ENCODE measurements at regions of chr5 and their contacts with region 1.

Region 1: GRCh38 chr5:15003511-15003920 is 131.9 kb upstream of the ANKH start:
- DNase-seq: peak; percentile 68 to 73 (median 70)
- H3K4me3 ChIP-seq: no peak overlapping the region
- H3K4me3 Mint-ChIP-seq: no peak overlapping the region
- H3K27ac ChIP-seq: no peak overlapping the region
- H3K27ac Mint-ChIP-seq: no peak overlapping the region
- H3K4me1 ChIP-seq: no peaks in the 10 kb centered on the region
- H3K4me1 Mint-ChIP-seq: peaks cover 0 to 3% (median 1%) of the 10 kb centered on the region in 4 donors
- H3K27me3 ChIP-seq: no peaks in the 10 kb centered on the region
- H3K27me3 Mint-ChIP-seq: peaks cover 2 to 4% of the 10 kb centered on the region in 2 donors

Region 2: DNA sequence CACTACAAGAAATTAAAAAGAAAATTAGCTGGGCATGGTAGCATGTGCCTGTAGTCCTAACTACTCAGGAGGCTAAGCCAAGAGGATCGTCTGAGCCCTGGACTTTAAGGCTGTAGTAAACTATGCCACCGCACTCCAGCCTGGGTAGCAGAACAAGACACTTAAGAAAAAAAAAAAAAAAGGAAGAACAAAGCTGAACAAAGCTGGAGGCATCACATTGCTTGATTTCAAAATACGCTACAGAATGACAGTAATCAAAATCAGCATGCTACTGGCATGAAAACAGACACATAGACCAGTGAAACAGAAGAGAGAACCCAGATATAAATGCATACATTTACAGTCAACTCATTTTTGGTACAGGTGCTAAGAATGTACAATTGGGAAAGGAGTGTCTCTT is 353.5 kb before region 1 on chr5:
- CTCF ChIA-PET with region 1: interaction called, 11 read pairs
- POLR2A ChIA-PET with region 1: no interaction called
- intact Hi-C with region 1: no loop called
- DNase-seq: no peak
- H3K4me3 ChIP-seq: no peak overlapping the region
- H3K4me3 Mint-ChIP-seq: no peak overlapping the region
- H3K27ac ChIP-seq: no peak overlapping the region
- H3K27ac Mint-ChIP-seq: peak overlapping the region in 1 of 7 donors; percentile 60
- H3K4me1 ChIP-seq: peaks cover under 1% of the 10 kb centered on the region
- H3K4me1 Mint-ChIP-seq: peaks cover 0 to 2% (median 1%) of the 10 kb centered on the region in 4 donors
- H3K27me3 ChIP-seq: peaks cover 3% of the 10 kb centered on the region
- H3K27me3 Mint-ChIP-seq: peaks cover 15 to 17% of the 10 kb centered on the region in 2 donors

Region 3: DNA sequence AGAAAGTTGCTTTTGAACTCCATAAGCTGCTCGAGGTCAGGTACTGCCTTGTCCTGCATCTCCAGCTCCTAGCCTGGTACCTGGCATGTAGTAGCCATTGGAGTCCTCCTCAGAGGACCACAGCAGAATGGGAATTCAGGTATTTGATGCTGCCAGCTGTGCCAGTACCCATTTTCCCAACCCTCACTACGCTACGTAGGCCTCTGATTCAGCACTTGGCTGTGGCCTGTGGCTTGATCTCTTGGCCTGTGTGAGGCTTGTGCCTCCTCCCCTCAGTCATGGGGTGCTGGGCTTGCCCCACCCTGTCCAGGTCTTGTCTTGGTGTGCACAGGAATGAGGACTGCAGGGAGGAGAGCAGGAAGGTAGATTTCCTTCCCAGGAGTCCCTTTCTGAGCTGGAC is 327.2 kb before region 1 on chr5:
- CTCF ChIA-PET with region 1: interaction called, 104 read pairs
- POLR2A ChIA-PET with region 1: no interaction called
- intact Hi-C with region 1: no loop called
- DNase-seq: no peak
- H3K4me3 ChIP-seq: no peak overlapping the region
- H3K4me3 Mint-ChIP-seq: peak overlapping the region in 7 of 8 donors; percentile 65 to 78 (median 74)
- H3K27ac ChIP-seq: peak overlapping the region; percentile 61
- H3K27ac Mint-ChIP-seq: peak overlapping the region; percentile 78 to 93 (median 88)
- H3K4me1 ChIP-seq: peaks cover 57% of the 10 kb centered on the region
- H3K4me1 Mint-ChIP-seq: peaks cover 53 to 63% (median 58%) of the 10 kb centered on the region in 4 donors
- H3K27me3 ChIP-seq: no peaks in the 10 kb centered on the region
- H3K27me3 Mint-ChIP-seq: no peaks in the 10 kb centered on the region

Region 4: DNA sequence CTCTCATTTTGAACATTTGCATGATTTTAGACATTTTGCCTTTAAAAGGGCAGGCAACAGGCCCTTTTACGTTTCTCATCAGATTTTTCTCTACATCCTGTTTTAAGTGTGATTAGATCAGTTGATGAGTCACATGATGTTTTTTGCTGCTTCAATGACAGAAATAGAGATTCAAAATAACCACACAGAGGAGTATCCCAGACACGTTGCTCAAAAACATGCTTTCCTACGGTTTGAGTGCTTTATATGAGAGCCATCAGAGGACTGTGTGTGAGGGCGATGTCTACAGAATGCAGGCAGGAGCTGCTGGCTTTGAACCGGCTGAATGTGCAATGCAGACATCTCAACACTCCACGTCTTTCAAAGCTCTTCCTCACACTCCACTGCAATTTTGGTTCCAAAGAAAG is 296.9 kb before region 1 on chr5:
- CTCF ChIA-PET with region 1: interaction called, 12 read pairs
- POLR2A ChIA-PET with region 1: no interaction called
- intact Hi-C with region 1: no loop called
- DNase-seq: peak; percentile 67 to 80 (median 73)
- H3K4me3 ChIP-seq: peak overlapping the region in 1 of 2 donors; percentile 26
- H3K4me3 Mint-ChIP-seq: peak overlapping the region; percentile 81 to 90 (median 82)
- H3K27ac ChIP-seq: peak overlapping the region; percentile 49
- H3K27ac Mint-ChIP-seq: peak overlapping the region; percentile 94 to 99 (median 99)
- H3K4me1 ChIP-seq: peaks cover 76% of the 10 kb centered on the region
- H3K4me1 Mint-ChIP-seq: peaks cover 66 to 91% (median 80%) of the 10 kb centered on the region in 4 donors
- H3K27me3 ChIP-seq: no peaks in the 10 kb centered on the region
- H3K27me3 Mint-ChIP-seq: no peaks in the 10 kb centered on the region

Region 5: DNA sequence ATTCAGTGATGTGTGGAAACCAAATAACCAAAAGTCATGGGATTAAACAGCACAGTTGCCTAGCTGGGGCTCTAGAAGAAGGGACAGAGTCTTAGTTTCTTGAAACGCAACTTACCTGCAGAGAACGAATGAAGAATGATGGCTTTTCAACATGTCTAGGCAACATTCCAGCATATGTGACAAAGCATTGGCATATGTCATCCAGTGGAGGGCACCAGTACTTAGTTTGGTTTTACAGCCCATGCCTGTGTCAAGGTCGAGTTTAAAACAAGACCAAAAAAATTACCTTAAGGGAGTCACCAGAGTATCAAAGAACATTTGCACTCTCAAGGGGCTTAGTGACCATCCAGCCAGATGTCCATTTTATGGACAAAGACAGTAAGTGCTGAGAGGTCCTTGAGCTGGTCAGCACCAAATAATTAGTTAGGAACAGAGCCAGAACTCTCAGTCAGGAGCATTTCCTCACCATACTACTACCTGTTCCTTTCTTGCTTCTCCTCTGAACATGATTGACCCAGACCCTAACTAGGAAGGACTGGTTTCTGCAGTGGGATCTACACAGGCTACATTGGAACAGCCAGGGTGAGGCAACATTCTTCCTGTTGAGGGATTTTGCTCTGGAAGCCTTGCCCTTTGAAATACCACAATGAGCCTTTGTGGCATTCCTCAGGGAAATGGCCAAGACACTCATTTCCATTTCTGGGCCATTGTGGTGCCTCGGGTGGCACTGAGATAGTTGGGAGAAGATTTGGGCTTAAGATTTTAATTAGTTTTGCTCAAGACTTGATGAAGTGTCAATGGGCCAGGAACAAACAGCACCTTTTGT is 56.5 kb before region 1 on chr5:
- CTCF ChIA-PET with region 1: interaction called, 27 read pairs
- POLR2A ChIA-PET with region 1: no interaction called
- intact Hi-C with region 1: loop called (anchors 1 kb)
- DNase-seq: peak in 4 of 5 donors; percentile 45 to 57 (median 50)
- H3K4me3 ChIP-seq: no peak overlapping the region
- H3K4me3 Mint-ChIP-seq: no peak overlapping the region
- H3K27ac ChIP-seq: no peak overlapping the region
- H3K27ac Mint-ChIP-seq: peak overlapping the region in 2 of 7 donors; percentile 2 to 54
- H3K4me1 ChIP-seq: no peaks in the 10 kb centered on the region
- H3K4me1 Mint-ChIP-seq: peaks cover 0 to 5% (median 2%) of the 10 kb centered on the region in 4 donors
- H3K27me3 ChIP-seq: no peaks in the 10 kb centered on the region
- H3K27me3 Mint-ChIP-seq: peaks cover 3% of the 10 kb centered on the region in 2 donors

Region 6: GRCh38 chr5:14983666-14984441 is 19.7 kb before region 1 on chr5:
- CTCF ChIA-PET with region 1: interaction called, 14 read pairs
- POLR2A ChIA-PET with region 1: no interaction called
- intact Hi-C with region 1: no loop called
- DNase-seq: peak in 3 of 5 donors; percentile 8 to 28 (median 23)
- H3K4me3 ChIP-seq: no peak overlapping the region
- H3K4me3 Mint-ChIP-seq: peak overlapping the region in 2 of 8 donors; percentile 27 to 30
- H3K27ac ChIP-seq: no peak overlapping the region
- H3K27ac Mint-ChIP-seq: peak overlapping the region in 4 of 7 donors; percentile 16 to 45 (median 28)
- H3K4me1 ChIP-seq: peaks cover 21% of the 10 kb centered on the region
- H3K4me1 Mint-ChIP-seq: peaks cover 16 to 22% (median 20%) of the 10 kb centered on the region in 4 donors
- H3K27me3 ChIP-seq: no peaks in the 10 kb centered on the region
- H3K27me3 Mint-ChIP-seq: peaks cover 0 to 1% of the 10 kb centered on the region in 2 donors